Activated CD4-positive, alpha-beta T cell treated with anti-CD3 and anti-CD28 coated beads, Interleukin-2, amount 10 ng/mL, durations not matched to agents 24 days and 14 days (primary cell): ENCODE measurements at regions of chr7 and their contacts with region 1.

Region 1: DNA sequence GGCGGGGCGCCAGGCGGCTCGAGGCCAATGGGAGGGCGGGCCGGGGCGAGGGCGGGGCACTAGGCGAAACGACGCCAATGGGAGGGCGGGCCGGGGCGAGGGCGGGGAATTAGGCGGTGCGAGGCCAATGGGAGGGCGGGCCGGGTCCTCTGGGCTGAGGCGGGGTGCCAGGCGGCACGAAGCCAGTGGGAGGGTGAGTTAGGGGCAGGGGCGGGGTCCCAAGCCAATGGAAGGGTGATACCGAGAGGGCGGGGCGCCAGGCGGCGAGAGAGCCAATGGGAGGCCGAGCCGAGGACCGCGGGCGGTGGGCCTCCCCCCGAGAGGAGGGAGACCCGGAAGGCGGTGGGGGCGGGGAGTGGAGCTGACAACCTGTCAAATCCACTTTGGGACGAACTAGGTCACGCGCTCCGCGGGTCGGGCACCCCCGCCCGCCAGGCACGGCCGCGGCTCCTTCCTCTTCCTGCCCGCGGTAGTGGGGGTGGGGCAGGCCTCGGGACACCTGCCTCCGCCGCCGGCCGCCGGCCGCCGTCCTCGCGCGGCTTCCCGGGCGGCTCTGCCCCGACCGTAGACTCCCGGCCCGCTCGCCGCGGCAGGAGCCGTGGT is 28.0 kb upstream of the KMT2C start:
- DNase-seq: peak; percentile 100
- H3K4me3 Mint-ChIP-seq: peak overlapping the region; percentile 97
- H3K27ac Mint-ChIP-seq: peak overlapping the region; percentile 69
- H3K4me1 Mint-ChIP-seq: peaks cover 12% of the 10 kb centered on the region
- H3K27me3 Mint-ChIP-seq: peaks cover 1% of the 10 kb centered on the region

Region 2: GRCh38 chr7:151631968-151632749 is 831.7 kb before region 1 on chr7:
- intact Hi-C with region 1: loop called (anchors 5 kb)
- DNase-seq: peak; percentile 97
- H3K4me3 Mint-ChIP-seq: peak overlapping the region; percentile 96
- H3K27ac Mint-ChIP-seq: peak overlapping the region; percentile 99
- H3K4me1 Mint-ChIP-seq: peaks cover 24% of the 10 kb centered on the region
- H3K27me3 Mint-ChIP-seq: peaks cover 2% of the 10 kb centered on the region

Region 3: DNA sequence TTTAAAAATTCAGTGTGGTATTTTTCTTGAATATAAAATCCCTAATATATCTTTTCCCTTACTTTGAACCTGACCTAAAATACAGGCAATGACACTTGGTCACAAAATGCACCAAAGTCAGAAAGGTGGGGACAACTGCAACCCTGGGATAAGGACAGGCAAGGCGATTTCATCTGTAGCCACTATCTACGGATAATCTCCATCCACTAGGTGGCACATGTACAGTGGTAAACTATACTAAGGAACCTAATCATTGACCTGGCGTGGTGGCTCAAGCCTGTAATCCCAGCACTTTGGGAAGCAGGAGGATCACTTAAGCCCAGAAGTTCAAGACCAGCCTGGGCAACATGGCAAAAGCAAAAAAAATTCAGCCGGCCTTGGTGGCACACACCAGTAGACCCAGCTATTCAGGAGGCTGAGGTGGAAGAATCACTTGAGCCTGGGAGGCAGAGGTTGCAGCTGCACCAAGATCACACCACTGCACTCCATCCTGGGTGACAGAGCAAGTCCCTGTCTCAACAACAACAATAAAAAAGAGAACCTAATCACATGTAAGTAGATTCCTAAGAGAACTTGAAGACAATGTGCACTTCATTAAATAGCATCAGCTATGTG is 126.9 kb before region 1 on chr7:
- intact Hi-C with region 1: loop called (anchors 2 kb)
- DNase-seq: peak; percentile 76
- H3K4me3 Mint-ChIP-seq: peak overlapping the region; percentile 70
- H3K27ac Mint-ChIP-seq: peak overlapping the region; percentile 64
- H3K4me1 Mint-ChIP-seq: peaks cover 27% of the 10 kb centered on the region
- H3K27me3 Mint-ChIP-seq: no peaks in the 10 kb centered on the region

Region 4: DNA sequence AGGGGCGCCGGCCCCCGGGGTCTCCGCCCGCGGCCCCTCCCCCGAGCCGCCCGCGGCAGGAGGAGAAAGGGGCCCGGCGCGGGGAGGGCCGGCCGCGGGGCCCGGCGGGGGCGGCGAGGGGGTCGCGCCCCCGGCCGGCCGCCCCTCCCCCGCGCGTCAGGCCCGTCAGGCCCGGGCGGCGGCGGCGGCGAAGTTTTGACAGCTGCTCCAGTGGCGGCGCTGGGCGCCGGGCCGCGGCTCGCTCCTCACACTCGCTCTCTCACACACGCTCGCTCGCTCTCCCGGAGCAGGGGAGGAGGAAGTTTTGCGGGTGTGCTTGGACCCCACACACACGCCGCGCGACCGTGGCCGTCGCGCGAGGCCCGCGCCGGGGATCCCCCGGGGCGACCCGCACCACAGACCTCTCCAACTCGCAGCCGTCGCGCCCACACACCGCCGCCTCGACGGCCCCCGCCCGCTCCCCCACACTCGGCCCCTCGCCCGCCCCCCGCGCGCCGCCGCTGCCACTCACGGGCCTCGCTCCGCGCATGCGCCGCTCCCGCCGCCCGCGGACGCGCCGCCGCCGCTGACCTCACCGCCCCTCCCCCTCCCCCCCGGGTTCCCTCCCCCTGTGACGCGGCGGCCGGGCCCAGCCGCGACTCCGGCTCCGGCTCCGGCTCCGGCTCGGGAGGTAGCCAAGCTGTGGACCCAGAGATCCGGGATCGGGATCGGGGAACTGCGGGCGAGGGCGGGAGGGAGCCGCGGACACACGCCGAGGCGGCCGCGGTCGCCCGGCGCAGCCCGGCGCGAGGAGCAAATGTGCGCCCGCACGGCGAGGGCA is 27.5 kb before region 1 on chr7:
- intact Hi-C with region 1: loop called (anchors 1 kb)
- DNase-seq: peak; percentile 95
- H3K4me3 Mint-ChIP-seq: peak overlapping the region; percentile 79
- H3K27ac Mint-ChIP-seq: peak overlapping the region; percentile 86
- H3K4me1 Mint-ChIP-seq: peaks cover 18% of the 10 kb centered on the region
- H3K27me3 Mint-ChIP-seq: peaks cover 3% of the 10 kb centered on the region

Region 5: GRCh38 chr7:152643979-152644559 is 180.3 kb after region 1 on chr7:
- intact Hi-C with region 1: no loop called
- DNase-seq: no peak
- H3K4me3 Mint-ChIP-seq: no peak overlapping the region
- H3K27ac Mint-ChIP-seq: no peak overlapping the region
- H3K4me1 Mint-ChIP-seq: no peaks in the 10 kb centered on the region
- H3K27me3 Mint-ChIP-seq: no peaks in the 10 kb centered on the region